ENCODE measurements at regions of chr15 and their contacts with region 1.

Region 1: GRCh38 chr15:70453766-70454165 is 309.6 kb downstream of the UACA start:
- DNase-seq: no peak
- ATAC-seq: no peak
- H3K4me3 ChIP-seq: no peak overlapping the region
- H3K27ac ChIP-seq: no peak overlapping the region
- H3K4me1 ChIP-seq: no peaks in the 10 kb centered on the region
- H3K27me3 ChIP-seq: peaks cover 0 to under 1% (median 0%) of the 10 kb centered on the region in 7 donors
- CTCF ChIP-seq: no peak

Region 2: DNA sequence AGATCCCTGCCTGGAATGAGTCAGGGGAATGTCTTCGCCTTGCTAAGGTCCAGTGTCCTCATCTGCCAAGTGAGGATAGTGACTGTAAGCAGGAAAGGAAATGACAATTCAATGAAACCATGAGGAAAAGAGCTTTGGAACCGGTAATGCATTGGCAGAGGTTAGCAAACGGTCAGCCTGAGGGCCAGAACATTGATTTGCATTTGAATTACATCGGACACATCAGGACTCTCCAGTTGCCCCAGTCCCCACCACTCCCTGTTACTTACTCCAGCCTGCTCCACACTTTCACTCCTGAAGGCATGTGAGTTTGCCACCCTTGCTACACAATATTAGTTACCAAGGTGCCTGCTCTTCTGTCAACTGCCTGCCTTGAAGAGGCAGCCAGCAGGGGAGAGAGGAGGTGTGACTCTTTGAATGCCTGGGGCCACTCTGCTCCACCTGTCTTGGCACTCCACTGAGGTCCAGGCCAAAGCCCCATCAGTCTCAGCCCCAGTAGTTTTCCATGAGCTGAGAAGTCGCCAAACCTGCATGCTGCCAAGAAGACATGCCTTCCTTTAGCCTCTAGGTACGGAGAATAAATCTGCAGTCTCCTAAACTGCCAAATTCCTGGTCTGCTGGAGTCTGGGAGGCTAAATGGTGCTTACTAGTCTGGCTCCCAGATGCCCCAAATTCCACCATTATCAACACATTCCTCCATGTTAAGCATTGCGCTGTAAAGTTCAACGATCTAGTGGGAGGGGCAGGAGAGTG is 164.4 kb before region 1 on chr15:
- intact Hi-C with region 1: no loop called
- DNase-seq: no peak
- ATAC-seq: peak in 3 of 8 donors; percentile 9 to 33 (median 26)
- H3K4me3 ChIP-seq: no peak overlapping the region
- H3K27ac ChIP-seq: no peak overlapping the region
- H3K4me1 ChIP-seq: peaks cover 4 to 42% (median 23%) of the 10 kb centered on the region in 9 donors
- H3K27me3 ChIP-seq: no peaks in the 10 kb centered on the region
- CTCF ChIP-seq: no peak

Region 3: GRCh38 chr15:70376929-70377691 is 76.7 kb before region 1 on chr15:
- intact Hi-C with region 1: loop called in 1 of 10 experiments (anchors 2 kb)
- DNase-seq: peak; percentile 68 to 78
- ATAC-seq: peak; percentile 82 to 91 (median 88)
- H3K4me3 ChIP-seq: peak overlapping the region in 6 of 10 donors; percentile 0 to 24 (median 15)
- H3K27ac ChIP-seq: peak overlapping the region in 5 of 10 donors; percentile 5 to 58 (median 22)
- H3K4me1 ChIP-seq: peaks cover 12 to 34% (median 29%) of the 10 kb centered on the region in 9 donors
- H3K27me3 ChIP-seq: peaks cover 0 to 12% (median 5%) of the 10 kb centered on the region in 7 donors
- CTCF ChIP-seq: no peak